Left ventricle myocardium inferior (tissue), 1 donor: ENCODE measurements at regions of chrX and their contacts with region 1.

Region 1: DNA sequence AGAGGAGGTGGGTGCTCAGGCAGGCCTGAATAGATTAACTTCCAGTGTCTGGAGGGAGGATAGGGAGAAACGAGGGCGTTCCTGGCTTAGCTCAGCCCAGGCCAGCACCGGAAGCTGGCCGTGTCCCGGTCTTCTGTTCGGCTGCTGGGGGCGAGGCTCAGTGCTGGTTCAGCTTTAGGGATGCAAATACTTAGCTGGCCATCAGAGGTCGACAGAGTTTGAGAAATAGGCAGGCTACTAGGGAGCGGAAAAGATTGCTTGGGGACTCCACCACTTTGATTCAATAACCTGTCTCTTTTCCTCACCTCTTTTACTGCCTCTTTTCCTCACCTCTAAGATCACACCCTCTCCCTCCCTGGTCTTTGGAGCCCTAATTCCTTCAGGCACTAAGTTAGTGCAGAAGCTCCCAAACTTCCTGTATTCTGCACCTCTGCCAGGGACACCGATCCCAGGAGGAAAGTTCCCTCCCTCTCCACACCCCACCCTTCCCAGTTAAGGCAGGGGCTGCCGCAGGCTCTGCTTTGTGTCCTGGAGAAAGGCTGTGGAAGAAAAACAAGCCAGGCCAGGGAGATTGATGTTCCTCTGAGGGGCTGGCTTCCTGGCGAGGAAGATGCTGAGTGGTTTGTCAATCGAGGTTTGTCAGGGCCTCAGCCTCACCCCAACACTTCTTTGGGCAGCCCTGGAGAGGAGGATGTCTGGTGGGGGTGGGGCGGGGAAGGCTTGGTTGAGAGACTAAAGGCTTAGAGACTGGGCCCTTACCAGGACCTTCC is 6.0 kb upstream of the EFNB1 start:
- DNase-seq: peak; percentile 38
- H3K4me3 ChIP-seq: no peak overlapping the region
- H3K27ac ChIP-seq: no peak overlapping the region
- H3K4me1 ChIP-seq: no peaks in the 10 kb centered on the region
- H3K27me3 ChIP-seq: no peaks in the 10 kb centered on the region
- CTCF ChIP-seq: peak; percentile 75

Region 2: GRCh38 chrX:68746988-68747387 is 75.8 kb before region 1 on chrX:
- intact Hi-C with region 1: no loop called
- DNase-seq: no peak
- H3K4me3 ChIP-seq: no peak overlapping the region
- H3K27ac ChIP-seq: no peak overlapping the region
- H3K4me1 ChIP-seq: no peaks in the 10 kb centered on the region
- H3K27me3 ChIP-seq: no peaks in the 10 kb centered on the region
- CTCF ChIP-seq: no peak

Region 3: DNA sequence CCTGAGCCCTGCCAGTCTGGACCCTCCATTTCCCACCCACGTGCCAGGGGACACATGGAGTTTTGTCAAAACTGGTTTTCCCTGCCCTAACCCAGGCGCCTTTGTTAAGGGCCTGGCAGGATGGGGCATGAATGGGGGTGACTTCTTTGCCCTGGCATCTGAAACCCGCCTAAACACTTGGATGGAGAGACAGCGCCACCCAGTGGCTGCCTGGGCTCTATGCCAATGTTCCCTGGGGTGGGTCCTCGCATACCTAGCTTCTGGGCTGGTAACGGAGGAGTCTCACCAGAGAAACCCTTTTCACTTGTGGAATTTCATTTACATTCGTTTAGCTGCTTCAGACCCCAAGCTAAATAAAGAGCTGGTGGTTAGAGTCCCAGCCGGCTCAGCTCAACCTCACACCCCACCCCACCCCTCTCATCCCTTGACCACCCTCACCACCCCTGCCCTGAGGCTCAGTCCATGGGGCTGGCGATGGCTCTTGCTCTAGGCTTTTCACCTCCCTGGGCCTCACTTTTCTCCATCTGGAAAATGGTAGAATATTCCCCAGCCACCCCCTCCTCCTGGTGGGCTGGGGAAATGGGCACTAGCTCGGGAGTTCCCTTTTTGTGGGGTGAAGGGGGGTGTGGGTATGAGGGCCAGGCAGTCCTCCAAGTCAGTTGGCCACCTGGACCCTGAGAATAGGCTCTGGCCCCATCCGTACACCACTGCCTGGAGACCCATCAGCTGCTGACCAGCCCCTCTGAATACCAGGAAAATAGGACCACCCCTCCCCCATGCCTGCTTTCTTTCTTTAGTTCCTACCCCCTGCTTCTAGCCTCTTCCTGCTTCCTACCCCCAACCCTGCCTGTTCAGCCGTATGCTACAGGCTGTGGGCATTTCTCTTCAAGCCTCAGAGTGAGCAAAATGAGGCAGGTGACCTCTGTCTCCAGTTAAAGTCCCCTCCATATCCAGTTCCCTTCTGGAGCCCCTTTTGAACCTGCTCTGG is 399.6 kb after region 1 on chrX:
- intact Hi-C with region 1: loop called (anchors 5 kb)
- DNase-seq: peak; percentile 50
- H3K4me3 ChIP-seq: no peak overlapping the region
- H3K27ac ChIP-seq: no peak overlapping the region
- H3K4me1 ChIP-seq: peaks cover 4% of the 10 kb centered on the region
- H3K27me3 ChIP-seq: no peaks in the 10 kb centered on the region
- CTCF ChIP-seq: peak; percentile 79